ENCODE measurements at regions of chr6 and their contacts with region 1.

Region 1: GRCh38 chr6:132100388-132100990 is 149.3 kb upstream of the CCN2 start:
- DNase-seq: no peak
- H3K4me3 ChIP-seq: no peak overlapping the region
- H3K27ac ChIP-seq: no peak overlapping the region
- H3K4me1 ChIP-seq: no peaks in the 10 kb centered on the region
- H3K27me3 ChIP-seq: no peaks in the 10 kb centered on the region
- CTCF ChIP-seq: no peak
- POLR2A ChIP-seq: no peak

Region 2: GRCh38 chr6:132202574-132202973 is 102.1 kb after region 1 on chr6:
- intact Hi-C with region 1: loop called (anchors 5 kb)
- DNase-seq: no peak
- H3K4me3 ChIP-seq: no peak overlapping the region
- H3K27ac ChIP-seq: peak overlapping the region in 1 of 2 donors; percentile 54
- H3K4me1 ChIP-seq: no peaks in the 10 kb centered on the region
- H3K27me3 ChIP-seq: no peaks in the 10 kb centered on the region
- CTCF ChIP-seq: no peak
- POLR2A ChIP-seq: no peak

Measured in breast epithelium (tissue), 4 donors.